ENCODE measurements at regions of chr11 and their contacts with region 1.

Region 1: GRCh38 chr11:121661880-121662486 is 209.2 kb upstream of the SORL1-AS1 start:
- DNase-seq: peak; percentile 39
- H3K4me3 ChIP-seq: no peak overlapping the region
- H3K27ac ChIP-seq: no peak overlapping the region
- H3K4me1 ChIP-seq: no peaks in the 10 kb centered on the region
- H3K27me3 ChIP-seq: no peaks in the 10 kb centered on the region
- CTCF ChIP-seq: no peak

Region 2: DNA sequence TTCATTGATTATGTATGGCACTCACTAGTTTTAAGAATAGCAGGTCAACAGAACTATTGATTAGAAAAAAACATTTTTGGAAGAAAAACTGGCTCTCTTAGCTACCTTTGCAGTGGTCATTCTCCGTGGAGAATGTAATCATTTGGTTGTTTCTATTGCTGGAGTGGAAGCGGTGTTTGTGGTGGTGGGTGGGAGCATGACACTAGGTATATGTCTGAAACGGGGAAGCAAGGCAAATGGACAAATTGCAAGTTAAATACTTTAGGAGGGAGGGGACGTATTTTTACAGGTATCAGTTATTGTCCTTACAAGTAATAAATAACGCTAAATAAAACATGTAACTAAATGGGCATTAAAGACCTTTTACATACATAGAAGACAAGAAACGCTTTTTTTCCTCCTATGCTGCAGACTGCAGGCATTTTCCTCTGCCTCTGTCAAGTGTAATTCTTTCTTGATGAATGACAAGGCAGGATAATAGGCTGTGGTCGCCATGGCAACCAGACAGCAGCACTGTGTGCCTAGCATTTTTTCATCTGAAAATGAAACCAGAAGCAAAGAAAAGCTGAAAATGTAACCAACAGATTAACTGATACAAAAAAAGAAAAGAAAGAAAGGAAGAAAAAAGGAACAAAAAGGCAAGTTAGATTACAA is 407.9 kb after region 1 on chr11:
- CTCF ChIA-PET with region 1: no interaction called
- dilution Hi-C with region 1: loop called (anchors 10 kb)
- in situ Hi-C with region 1: no loop called
- intact Hi-C with region 1: no loop called
- DNase-seq: peak; percentile 43
- H3K4me3 ChIP-seq: no peak overlapping the region
- H3K27ac ChIP-seq: no peak overlapping the region
- H3K4me1 ChIP-seq: no peaks in the 10 kb centered on the region
- H3K27me3 ChIP-seq: no peaks in the 10 kb centered on the region
- CTCF ChIP-seq: no peak

Region 3: DNA sequence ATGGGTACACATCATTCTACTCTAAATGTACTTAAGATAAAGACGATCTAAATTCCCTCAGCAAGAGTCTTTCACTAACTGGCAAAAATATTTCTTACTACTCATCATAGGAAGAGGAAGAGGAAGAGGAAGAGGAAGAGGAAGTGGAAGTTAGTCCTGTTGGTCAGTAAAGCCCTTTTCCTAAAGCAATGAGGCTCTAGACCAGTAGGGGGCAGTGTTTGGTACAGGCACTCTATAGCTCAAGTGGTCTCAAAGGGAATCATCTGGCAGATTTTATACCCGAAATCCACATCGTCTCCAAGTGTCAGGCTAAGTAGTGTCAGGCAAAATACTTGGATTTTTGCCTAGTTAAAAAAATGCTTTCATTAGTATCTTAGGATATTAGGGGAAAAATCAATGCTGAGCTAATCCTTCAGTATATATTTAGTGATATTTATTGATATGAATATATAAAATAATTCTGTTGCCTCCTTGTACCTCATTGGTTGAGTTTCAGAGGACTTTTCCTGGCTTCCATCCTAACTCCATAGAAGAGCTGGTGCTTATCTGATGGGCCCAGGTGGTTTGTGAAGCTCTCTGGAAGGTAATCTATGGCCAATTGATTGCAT is 446.3 kb after region 1 on chr11:
- CTCF ChIA-PET with region 1: no interaction called
- dilution Hi-C with region 1: loop called (anchors 10 kb)
- in situ Hi-C with region 1: loop called in 1 of 2 experiments (anchors 5 kb)
- intact Hi-C with region 1: no loop called
- DNase-seq: no peak
- H3K4me3 ChIP-seq: no peak overlapping the region
- H3K27ac ChIP-seq: no peak overlapping the region
- H3K4me1 ChIP-seq: peaks cover 28% of the 10 kb centered on the region
- H3K27me3 ChIP-seq: no peaks in the 10 kb centered on the region
- CTCF ChIP-seq: peak; percentile 64 to 83

Measured in mammary epithelial cell (primary cell).